ENCODE measurements at regions of chr3 and their contacts with region 1.

Region 1: DNA sequence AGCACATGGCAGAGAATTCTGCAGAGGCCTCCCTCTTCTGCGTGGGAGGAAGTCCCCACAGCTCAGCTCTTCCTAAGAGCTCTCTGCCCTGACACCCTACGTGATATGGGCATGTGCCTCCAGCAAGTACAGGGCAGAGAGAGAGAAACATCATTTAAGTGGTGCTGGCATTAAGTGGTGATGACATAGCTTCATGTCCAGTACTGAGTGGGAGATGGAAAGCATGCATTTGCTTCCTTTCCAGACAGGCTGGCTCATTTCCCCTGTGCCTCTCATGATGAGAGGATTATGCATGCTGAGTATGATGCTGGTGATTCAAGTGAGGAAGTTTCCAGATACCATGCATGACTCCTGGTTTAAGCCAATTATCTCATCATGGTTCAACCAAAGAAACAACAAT is 26.9 kb downstream of the BFSP2 start:
- DNase-seq: no peak
- ATAC-seq: no peak
- H3K4me3 ChIP-seq: no peak overlapping the region
- H3K27ac ChIP-seq: no peak overlapping the region
- H3K4me1 ChIP-seq: no peaks in the 10 kb centered on the region
- H3K27me3 ChIP-seq: no peaks in the 10 kb centered on the region
- CTCF ChIP-seq: no peak

Region 2: DNA sequence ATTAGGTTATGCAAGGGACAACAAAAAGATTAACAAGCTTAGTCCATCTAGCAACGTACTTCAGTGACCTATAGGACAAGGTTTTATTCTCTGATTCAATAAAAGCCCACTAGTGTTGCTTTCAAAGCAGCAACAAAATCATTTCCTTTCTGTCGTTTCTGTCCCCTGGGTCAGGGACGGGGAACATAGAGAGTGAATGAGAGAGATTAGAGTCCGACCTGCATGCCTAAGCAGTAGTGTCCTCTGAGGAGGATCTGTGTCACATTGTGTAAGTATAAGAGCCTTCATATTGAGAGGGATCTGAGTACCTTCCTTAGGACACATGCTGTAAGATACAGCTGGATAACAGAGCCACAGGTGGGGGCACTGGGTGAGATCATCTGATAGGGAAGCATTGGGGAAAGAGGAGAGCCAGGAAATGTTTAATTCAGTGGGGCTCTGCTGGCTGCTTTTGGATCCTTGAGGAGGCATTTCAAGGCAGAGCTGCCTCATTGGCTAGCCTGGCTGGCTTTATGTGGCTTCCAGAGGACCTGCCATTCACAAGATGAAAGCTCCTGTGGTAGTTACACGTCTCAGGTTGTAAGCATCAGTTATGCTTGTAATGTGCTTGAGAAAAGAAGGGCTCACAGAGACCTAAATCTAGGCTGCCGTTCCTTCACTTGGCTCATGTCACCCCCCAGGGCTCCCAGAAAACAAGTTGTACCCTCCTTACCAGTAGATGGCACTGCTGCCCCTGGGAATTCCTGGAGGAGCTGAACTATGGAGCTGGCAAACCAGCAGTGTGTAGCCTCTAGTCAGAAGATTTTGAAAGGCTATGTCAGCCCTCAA is 385.8 kb before region 1 on chr3:
- intact Hi-C with region 1: loop called in 1 of 2 experiments (anchors 2 kb)
- DNase-seq: peak; percentile 67 to 81
- ATAC-seq: peak; percentile 74 to 83 (median 80)
- H3K4me3 ChIP-seq: peak overlapping the region; percentile 19
- H3K27ac ChIP-seq: peak overlapping the region; percentile 44
- H3K4me1 ChIP-seq: peaks cover 9% of the 10 kb centered on the region
- H3K27me3 ChIP-seq: no peaks in the 10 kb centered on the region
- CTCF ChIP-seq: peak; percentile 76

Measured in psoas muscle (tissue), 8 donors.